ENCODE measurements at regions of chr14 and their contacts with region 1.

Region 1: DNA sequence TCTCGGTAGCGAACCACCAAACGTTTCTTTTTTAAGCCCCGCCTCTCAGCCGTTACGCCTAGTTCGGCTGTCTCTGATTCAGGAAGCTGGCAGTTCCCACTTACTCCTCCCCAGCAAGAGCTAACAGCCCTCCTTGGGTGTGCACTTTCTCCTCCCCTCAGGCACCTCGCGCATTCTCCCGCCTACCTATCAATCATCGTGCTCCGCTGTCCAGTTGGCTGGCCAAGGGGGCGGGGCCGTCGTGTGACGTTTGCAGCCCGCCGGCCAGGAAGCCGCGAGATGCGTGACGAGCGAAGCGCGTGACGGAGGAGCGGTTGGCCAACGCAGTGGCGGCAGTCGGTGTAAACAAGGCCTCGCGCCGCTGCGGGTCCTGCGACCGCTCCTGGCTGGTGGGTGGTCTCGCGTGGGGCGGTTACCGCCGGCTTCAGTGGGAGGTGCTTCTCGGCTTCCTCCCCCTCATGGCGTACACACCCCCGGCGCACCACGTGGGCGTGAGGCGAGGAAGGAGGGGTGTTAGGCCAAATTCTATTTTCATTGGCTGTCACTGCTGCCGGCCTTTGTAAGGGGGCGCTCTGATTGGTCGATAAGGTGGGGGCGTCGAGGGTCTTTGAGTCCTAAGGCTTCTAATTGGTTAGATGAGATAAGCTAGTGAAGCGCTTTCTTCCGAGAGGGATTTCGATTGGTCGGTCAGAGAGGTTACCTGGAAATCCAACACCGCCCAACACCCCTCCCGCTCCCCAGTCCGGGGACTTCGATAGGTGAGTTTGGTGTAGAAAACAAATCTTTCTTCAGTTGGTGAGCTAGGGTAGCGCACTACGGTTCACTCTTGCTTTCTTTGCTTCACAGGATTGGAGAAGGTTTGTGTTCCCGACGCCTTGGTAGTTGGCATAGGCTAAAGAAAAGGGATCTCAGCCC is at the starts of genes DCAF11 and NRL:
- DNase-seq: peak; percentile 99
- ATAC-seq: peak; percentile 93 to 95 (median 94)
- H3K4me3 ChIP-seq: peak within 1 kb of the TSS; percentile 48 to 79 (median 71)
- H3K27ac ChIP-seq: peak within 1 kb of the TSS; percentile 95 to 100 (median 97)
- H3K4me1 ChIP-seq: peaks cover 0 to 31% (median 18%) of the 10 kb centered on the region in 12 donors
- H3K27me3 ChIP-seq: no peaks in the 10 kb centered on the region
- CTCF ChIP-seq: peak in 2 of 12 donors; percentile 22 to 36
- POLR2A ChIP-seq: peak in 1 of 2 donors; percentile 9
- total RNA-seq, gene DCAF11: 55.1 to 117 (median 75.0) TPM
- total RNA-seq, gene NRL: 1.3 to 2.9 (median 2.1) TPM

Region 2: DNA sequence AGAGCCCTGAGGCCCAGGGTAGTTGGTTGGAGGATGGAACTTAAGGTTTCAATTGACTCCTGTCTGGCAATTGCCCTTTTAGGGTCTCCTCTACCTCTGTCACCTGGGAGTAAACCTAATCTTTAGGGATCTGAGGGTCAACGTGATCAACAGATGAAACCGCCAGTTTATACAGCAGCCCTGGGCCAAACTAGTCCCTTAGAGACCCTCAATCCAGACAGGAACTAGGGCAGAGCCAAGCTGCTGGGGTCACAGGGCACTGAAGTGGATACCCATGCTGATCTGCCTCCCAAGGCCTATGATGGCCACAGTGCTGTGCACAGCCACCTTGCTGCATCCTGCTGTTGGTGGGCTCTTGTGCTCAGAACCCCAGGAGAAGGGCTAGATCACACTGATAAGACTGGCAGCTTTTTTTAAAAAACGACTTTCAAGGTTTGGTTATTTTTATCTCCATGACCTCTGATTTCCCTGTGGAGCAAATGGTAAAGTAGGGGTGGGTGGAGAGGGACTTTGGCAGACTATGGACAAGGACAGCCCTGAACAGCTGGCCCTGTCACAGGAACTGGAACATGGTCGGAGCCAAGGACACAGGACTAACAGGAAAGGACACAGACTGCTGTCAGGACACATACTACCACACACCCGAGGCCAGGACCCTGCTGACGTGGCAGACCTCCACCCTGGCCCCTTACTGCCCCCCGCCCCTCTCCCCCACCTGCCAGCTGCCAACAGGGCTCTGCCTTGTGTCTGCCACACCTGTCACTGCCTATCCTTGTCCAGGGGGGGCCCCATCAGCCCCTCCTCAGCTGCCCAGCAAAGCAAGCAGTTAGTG is 16.1 kb after region 1 on chr14:
- intact Hi-C with region 1: loop called in 3 of 10 experiments (anchors 1 to 2 kb)
- DNase-seq: peak; percentile 81 to 91 (median 81)
- ATAC-seq: peak; percentile 77 to 87 (median 83)
- H3K4me3 ChIP-seq: peak overlapping the region in 10 of 12 donors; percentile 1 to 58 (median 44)
- H3K27ac ChIP-seq: peak overlapping the region; percentile 79 to 99 (median 93)
- H3K4me1 ChIP-seq: peaks cover 0 to 41% (median 23%) of the 10 kb centered on the region in 12 donors
- H3K27me3 ChIP-seq: no peaks in the 10 kb centered on the region
- CTCF ChIP-seq: no peak
- POLR2A ChIP-seq: no peak

Region 3: GRCh38 chr14:24141097-24141880 is 26.5 kb after region 1 on chr14 and contains the start of gene EMC9:
- intact Hi-C with region 1: loop called in 5 of 10 experiments (anchors 1 to 5 kb)
- DNase-seq: peak; percentile 100
- ATAC-seq: peak; percentile 90 to 96 (median 94)
- H3K4me3 ChIP-seq: peak within 1 kb of the TSS; percentile 64 to 95 (median 72)
- H3K27ac ChIP-seq: peak within 1 kb of the TSS; percentile 59 to 96 (median 90)
- H3K4me1 ChIP-seq: peaks cover 3 to 91% (median 44%) of the 10 kb centered on the region in 12 donors
- H3K27me3 ChIP-seq: no peaks in the 10 kb centered on the region
- CTCF ChIP-seq: peak; percentile 26 to 75 (median 57)
- POLR2A ChIP-seq: peak in 1 of 2 donors; percentile 94
- total RNA-seq, gene EMC9: 9.6 to 18.7 (median 13.8) TPM

Region 4: GRCh38 chr14:24146978-24147760 is 32.4 kb after region 1 on chr14 and contains the start of gene RNF31:
- intact Hi-C with region 1: loop called in 3 of 10 experiments (anchors 1 to 5 kb)
- DNase-seq: peak; percentile 98 to 99 (median 99)
- ATAC-seq: peak; percentile 93 to 97 (median 95)
- H3K4me3 ChIP-seq: peak within 1 kb of the TSS; percentile 57 to 94 (median 84)
- H3K27ac ChIP-seq: peak within 1 kb of the TSS; percentile 49 to 97 (median 94)
- H3K4me1 ChIP-seq: peaks cover 6 to 51% (median 25%) of the 10 kb centered on the region in 12 donors
- H3K27me3 ChIP-seq: no peaks in the 10 kb centered on the region
- CTCF ChIP-seq: no peak
- POLR2A ChIP-seq: peak in 1 of 2 donors; percentile 56
- total RNA-seq, gene RNF31: 31.6 to 54.2 (median 36.6) TPM

Region 5: GRCh38 chr14:24188251-24189058 is 73.7 kb after region 1 on chr14 and contains the start of gene IPO4:
- intact Hi-C with region 1: loop called in 1 of 10 experiments (anchors 2 kb)
- DNase-seq: peak; percentile 96 to 98 (median 97)
- ATAC-seq: peak; percentile 92 to 98 (median 94)
- H3K4me3 ChIP-seq: peak within 1 kb of the TSS; percentile 48 to 83 (median 69)
- H3K27ac ChIP-seq: peak within 1 kb of the TSS in 11 of 12 donors; percentile 41 to 80 (median 67)
- H3K4me1 ChIP-seq: peaks cover 0 to 24% (median 14%) of the 10 kb centered on the region in 12 donors
- H3K27me3 ChIP-seq: no peaks in the 10 kb centered on the region
- CTCF ChIP-seq: no peak
- POLR2A ChIP-seq: peak in 1 of 2 donors; percentile 45
- total RNA-seq, gene IPO4: 9.1 to 25.6 (median 17.2) TPM

Region 6: DNA sequence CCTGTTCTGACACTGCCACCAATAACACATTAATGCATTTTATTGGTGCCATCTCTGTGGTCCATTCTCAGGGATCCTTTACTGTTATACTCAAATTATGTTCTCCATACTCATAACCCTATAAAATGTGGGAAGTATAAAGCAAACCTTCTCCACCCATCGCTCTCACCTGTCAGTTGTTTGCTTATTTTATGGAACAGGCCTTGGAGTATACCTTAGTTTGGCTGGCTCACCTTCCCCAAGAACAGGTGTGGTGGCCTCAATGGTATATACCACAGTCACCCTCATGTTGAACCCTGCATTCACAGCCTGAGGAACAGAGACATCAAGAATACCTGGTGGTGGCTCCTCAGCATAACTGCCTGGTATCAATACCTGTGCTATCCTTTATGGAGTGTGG is 1243.5 kb after region 1 on chr14:
- intact Hi-C with region 1: no loop called
- DNase-seq: no peak
- ATAC-seq: no peak
- H3K4me3 ChIP-seq: no peak overlapping the region
- H3K27ac ChIP-seq: no peak overlapping the region
- H3K4me1 ChIP-seq: no peaks in the 10 kb centered on the region
- H3K27me3 ChIP-seq: no peaks in the 10 kb centered on the region
- CTCF ChIP-seq: no peak
- POLR2A ChIP-seq: no peak

Measured in heart left ventricle (tissue), 16 donors.